CD8-positive, alpha-beta T cell (primary cell): ENCODE measurements at regions of chr17 and their contacts with region 1.

Region 1: DNA sequence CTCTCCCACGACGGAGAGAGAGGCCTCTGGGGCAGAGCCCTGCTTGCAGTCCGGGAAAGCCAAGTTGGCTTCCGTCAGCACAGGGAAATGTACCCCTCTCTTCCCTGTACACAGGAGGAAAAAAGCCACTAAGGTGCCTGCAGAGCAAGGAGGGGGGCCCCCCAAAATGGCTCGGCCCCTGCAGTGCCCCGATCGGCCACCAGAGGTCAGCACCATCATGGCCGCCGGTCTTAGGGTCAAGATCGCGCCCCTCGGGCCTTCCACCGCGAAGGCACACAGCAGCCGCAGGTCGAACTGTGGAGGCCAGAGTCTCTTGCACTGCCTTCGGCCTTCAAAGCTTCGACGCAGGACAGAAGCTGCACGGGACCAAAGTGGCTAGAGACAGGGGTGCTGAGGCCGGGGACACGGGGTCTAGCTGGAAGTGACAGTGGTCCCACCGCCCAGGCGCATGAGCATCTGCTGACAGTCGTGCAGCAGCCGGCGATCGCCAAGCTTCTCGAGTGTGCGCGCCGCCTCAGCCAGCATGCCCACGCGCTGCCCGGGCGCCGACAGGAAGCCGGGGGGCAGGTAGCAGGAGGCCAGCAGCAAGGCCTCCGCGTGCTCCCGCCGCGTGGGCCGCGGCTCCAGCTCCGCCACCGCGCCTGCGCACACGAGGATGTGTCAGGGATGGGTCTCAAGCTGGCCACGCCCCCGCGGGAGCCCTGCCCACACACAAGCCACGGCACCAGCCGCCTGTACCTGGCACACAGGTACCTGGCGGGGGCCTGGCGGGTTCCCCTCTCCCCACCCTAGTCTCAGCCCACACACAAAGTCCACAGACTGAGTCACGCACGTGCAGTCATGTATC is 24.4 kb downstream of the SREBF1 start:
- DNase-seq: peak; percentile 52 to 87 (median 72)
- ATAC-seq: peak; percentile 74
- H3K4me3 ChIP-seq: no peak overlapping the region
- H3K4me3 Mint-ChIP-seq: no peak overlapping the region
- H3K27ac ChIP-seq: no peak overlapping the region
- H3K27ac Mint-ChIP-seq: no peak overlapping the region
- H3K4me1 ChIP-seq: peaks cover 14% of the 10 kb centered on the region
- H3K4me1 Mint-ChIP-seq: peaks cover 21% of the 10 kb centered on the region
- H3K27me3 ChIP-seq: no peaks in the 10 kb centered on the region
- H3K27me3 Mint-ChIP-seq: no peaks in the 10 kb centered on the region
- CTCF ChIP-seq: peak; percentile 98

Region 2: GRCh38 chr17:17681187-17681848 is 131.1 kb before region 1 on chr17 and contains the start of gene RAI1:
- CTCF ChIA-PET with region 1: interaction called, 44 read pairs
- POLR2A ChIA-PET with region 1: no interaction called
- intact Hi-C with region 1: loop called (anchors 2 to 5 kb)
- DNase-seq: peak; percentile 51 to 89 (median 73)
- ATAC-seq: peak; percentile 58
- H3K4me3 ChIP-seq: peak within 1 kb of the TSS; percentile 74
- H3K4me3 Mint-ChIP-seq: peak within 1 kb of the TSS; percentile 93
- H3K27ac ChIP-seq: peak within 1 kb of the TSS; percentile 67 to 90
- H3K27ac Mint-ChIP-seq: peak within 1 kb of the TSS; percentile 77
- H3K4me1 ChIP-seq: peaks cover 34% of the 10 kb centered on the region
- H3K4me1 Mint-ChIP-seq: peaks cover 34% of the 10 kb centered on the region
- H3K27me3 ChIP-seq: no peaks in the 10 kb centered on the region
- H3K27me3 Mint-ChIP-seq: no peaks in the 10 kb centered on the region
- CTCF ChIP-seq: peak; percentile 50
- total RNA-seq, gene RAI1: 22.9 to 23.5 TPM

Region 3: DNA sequence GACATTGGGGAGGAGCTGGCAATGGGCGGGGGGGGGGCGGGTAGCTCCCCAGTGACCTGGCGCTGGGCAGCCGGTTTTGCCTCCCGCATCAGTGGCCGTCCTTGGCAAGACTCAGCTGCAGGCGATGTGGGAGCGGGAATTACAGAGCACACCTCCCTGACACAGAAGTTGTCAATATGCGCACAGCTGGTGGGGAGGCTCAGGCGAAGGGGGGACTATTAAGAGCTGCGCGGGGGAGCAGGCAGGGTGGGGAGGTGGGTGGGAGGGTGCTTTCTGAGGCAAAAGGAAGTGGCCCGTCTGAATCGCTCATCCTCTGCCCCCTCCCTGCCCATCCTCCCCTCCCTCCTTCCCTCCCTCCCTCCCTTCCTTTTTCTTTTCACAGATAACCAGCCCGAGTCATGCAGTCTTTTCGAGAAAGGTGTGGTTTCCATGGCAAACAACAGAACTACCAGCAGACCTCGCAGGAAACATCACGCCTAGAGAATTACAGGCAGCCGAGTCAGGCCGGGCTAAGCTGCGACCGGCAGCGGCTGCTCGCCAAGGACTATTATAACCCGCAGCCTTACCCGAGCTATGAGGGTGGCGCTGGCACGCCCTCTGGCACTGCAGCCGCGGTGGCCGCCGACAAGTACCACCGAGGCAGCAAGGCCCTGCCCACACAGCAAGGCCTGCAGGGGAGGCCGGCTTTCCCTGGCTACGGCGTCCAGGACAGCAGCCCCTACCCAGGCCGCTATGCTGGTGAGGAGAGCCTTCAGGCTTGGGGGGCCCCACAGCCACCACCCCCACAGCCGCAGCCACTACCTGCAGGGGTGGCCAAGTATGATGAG is 19.7 kb before region 1 on chr17:
- CTCF ChIA-PET with region 1: interaction called, 34 read pairs
- POLR2A ChIA-PET with region 1: no interaction called
- intact Hi-C with region 1: no loop called
- DNase-seq: peak; percentile 39 to 94 (median 68)
- ATAC-seq: peak; percentile 91
- H3K4me3 ChIP-seq: peak overlapping the region; percentile 16 to 24
- H3K4me3 Mint-ChIP-seq: peak overlapping the region; percentile 66
- H3K27ac ChIP-seq: peak overlapping the region; percentile 65 to 76
- H3K27ac Mint-ChIP-seq: peak overlapping the region; percentile 82
- H3K4me1 ChIP-seq: peaks cover 23% of the 10 kb centered on the region
- H3K4me1 Mint-ChIP-seq: peaks cover 32% of the 10 kb centered on the region
- H3K27me3 ChIP-seq: no peaks in the 10 kb centered on the region
- H3K27me3 Mint-ChIP-seq: no peaks in the 10 kb centered on the region
- CTCF ChIP-seq: no peak

Region 4: DNA sequence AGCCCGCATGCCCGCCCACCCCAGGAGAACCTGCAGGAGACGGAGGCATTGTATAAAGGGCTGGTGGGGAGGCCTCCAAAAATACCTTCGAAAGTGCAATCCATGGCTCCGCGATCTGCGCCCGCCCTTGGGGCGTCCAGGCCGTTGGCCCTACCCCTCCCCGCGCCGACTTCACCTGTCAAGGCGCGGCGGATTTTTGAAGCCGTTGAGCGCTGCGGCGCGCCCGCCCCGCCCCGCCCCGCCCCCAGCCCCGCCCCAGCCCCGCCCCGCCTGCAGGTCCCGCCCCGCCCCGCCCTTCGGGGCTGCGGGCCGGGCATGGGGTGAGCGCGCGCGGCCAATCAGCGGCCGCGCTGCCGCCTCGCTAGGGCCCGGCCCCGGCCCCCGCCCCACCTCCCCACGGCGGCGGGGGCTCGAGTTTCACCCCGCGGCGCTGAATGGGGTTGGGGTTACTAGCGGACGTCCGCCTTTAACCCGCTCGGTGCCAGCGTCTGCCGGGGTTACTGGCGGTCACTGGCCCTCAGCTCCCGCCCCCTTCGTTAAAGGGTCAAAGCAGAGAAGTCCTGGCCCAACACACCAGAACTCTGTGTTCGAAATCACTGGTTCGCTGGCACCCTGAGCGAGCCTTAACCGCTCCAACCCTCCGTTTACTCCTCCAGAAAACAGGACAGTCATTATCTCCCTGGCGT is 11.1 kb after region 1 on chr17:
- CTCF ChIA-PET with region 1: interaction called, 38 read pairs
- POLR2A ChIA-PET with region 1: interaction called, 5 read pairs
- intact Hi-C with region 1: no loop called
- DNase-seq: peak; percentile 63 to 92 (median 80)
- ATAC-seq: peak; percentile 87
- H3K4me3 ChIP-seq: peak overlapping the region; percentile 46 to 55
- H3K4me3 Mint-ChIP-seq: peak overlapping the region; percentile 81
- H3K27ac ChIP-seq: peak overlapping the region; percentile 50 to 85
- H3K27ac Mint-ChIP-seq: peak overlapping the region; percentile 95
- H3K4me1 ChIP-seq: peaks cover 95% of the 10 kb centered on the region
- H3K4me1 Mint-ChIP-seq: peaks cover 91% of the 10 kb centered on the region
- H3K27me3 ChIP-seq: no peaks in the 10 kb centered on the region
- H3K27me3 Mint-ChIP-seq: no peaks in the 10 kb centered on the region
- CTCF ChIP-seq: no peak

Region 5: GRCh38 chr17:17859909-17860765 is 47.7 kb after region 1 on chr17:
- CTCF ChIA-PET with region 1: interaction called, 308 read pairs
- POLR2A ChIA-PET with region 1: no interaction called
- intact Hi-C with region 1: loop called (anchors 1 kb)
- DNase-seq: peak; percentile 45 to 84 (median 71)
- ATAC-seq: peak; percentile 98
- H3K4me3 ChIP-seq: no peak overlapping the region
- H3K4me3 Mint-ChIP-seq: no peak overlapping the region
- H3K27ac ChIP-seq: no peak overlapping the region
- H3K27ac Mint-ChIP-seq: no peak overlapping the region
- H3K4me1 ChIP-seq: peaks cover 44% of the 10 kb centered on the region
- H3K4me1 Mint-ChIP-seq: peaks cover 38% of the 10 kb centered on the region
- H3K27me3 ChIP-seq: no peaks in the 10 kb centered on the region
- H3K27me3 Mint-ChIP-seq: no peaks in the 10 kb centered on the region
- CTCF ChIP-seq: peak; percentile 93

Region 6: GRCh38 chr17:17919169-17920107 is 107.0 kb after region 1 on chr17:
- CTCF ChIA-PET with region 1: interaction called, 9 read pairs
- POLR2A ChIA-PET with region 1: no interaction called
- intact Hi-C with region 1: loop called (anchors 1 to 10 kb)
- DNase-seq: peak; percentile 34 to 79 (median 67)
- ATAC-seq: peak; percentile 97
- H3K4me3 ChIP-seq: no peak overlapping the region
- H3K4me3 Mint-ChIP-seq: no peak overlapping the region
- H3K27ac ChIP-seq: no peak overlapping the region
- H3K27ac Mint-ChIP-seq: no peak overlapping the region
- H3K4me1 ChIP-seq: peaks cover 6% of the 10 kb centered on the region
- H3K4me1 Mint-ChIP-seq: peaks cover 13% of the 10 kb centered on the region
- H3K27me3 ChIP-seq: no peaks in the 10 kb centered on the region
- H3K27me3 Mint-ChIP-seq: no peaks in the 10 kb centered on the region
- CTCF ChIP-seq: peak; percentile 73

Region 7: DNA sequence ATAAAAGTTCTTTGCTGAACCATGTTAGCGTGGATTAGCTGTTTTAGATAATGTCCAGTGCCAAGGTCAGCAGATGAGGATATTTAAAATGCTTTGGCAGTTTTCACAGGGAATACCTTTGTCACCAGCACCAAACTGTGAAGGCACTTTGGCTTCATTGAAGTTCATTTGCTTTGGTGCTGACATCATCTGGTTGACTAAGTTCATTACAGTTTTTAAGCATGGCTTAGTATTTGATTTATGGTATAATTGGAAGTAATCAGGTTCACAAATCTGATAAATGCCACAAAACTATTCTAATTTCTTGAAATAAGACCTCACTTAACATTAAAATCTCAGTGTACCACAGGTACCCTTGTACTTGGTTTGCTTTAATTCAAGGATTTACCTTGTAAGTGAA is 231.1 kb after region 1 on chr17:
- CTCF ChIA-PET with region 1: no interaction called
- POLR2A ChIA-PET with region 1: no interaction called
- intact Hi-C with region 1: no loop called
- DNase-seq: peak in 1 of 9 experiments; percentile 40
- ATAC-seq: no peak
- H3K4me3 ChIP-seq: no peak overlapping the region
- H3K4me3 Mint-ChIP-seq: no peak overlapping the region
- H3K27ac ChIP-seq: no peak overlapping the region
- H3K27ac Mint-ChIP-seq: no peak overlapping the region
- H3K4me1 ChIP-seq: peaks cover 21% of the 10 kb centered on the region
- H3K4me1 Mint-ChIP-seq: peaks cover 40% of the 10 kb centered on the region
- H3K27me3 ChIP-seq: no peaks in the 10 kb centered on the region
- H3K27me3 Mint-ChIP-seq: no peaks in the 10 kb centered on the region
- CTCF ChIP-seq: no peak